Motor neuron (in vitro differentiated cells): ENCODE measurements at regions of chr2 and their contacts with region 1.

Region 1: DNA sequence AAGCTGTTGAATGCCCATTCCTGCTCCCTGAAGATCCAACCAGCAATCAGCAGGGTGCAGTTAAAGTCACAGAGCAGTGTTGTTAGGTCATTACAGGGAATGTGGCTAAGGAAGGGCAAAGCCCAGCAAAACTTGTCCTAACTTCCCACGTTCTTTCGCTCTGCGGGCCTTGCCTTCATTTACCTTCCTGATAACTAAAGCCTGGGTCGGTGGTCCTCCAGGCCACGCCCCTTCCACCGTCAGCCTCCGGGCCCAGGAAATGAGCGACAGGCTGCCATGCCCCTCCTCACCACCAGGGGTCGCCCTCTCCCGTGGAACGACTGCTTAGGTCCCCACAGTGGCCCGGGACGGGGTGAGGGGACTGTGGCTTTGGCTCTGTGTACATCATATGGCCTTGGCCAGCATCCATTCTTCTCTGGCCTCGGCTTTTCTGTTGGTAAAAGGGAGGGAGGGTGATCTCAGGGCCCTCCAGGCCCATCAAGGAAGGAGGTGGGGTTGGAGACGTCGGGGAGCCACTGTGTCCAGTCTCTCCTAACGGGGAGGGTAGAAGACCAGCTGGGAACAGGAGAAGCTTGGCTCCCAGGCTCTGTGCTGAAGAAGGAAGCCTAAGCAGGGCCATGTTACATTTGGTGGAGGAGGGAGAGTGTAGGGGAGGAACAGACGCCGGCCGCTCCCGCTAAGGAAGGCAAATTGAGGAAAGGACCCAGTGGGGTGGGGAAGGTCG is 2.2 kb downstream of the SH2D6 start:
- ATAC-seq: peak; percentile 54 to 71 (median 57)
- H3K4me3 ChIP-seq: peak overlapping the region in 1 of 5 donors; percentile 0
- H3K27ac ChIP-seq: peak overlapping the region in 1 of 2 donors; percentile 58
- H3K4me1 ChIP-seq: peaks cover 28 to 32% of the 10 kb centered on the region in 2 donors

Region 2: DNA sequence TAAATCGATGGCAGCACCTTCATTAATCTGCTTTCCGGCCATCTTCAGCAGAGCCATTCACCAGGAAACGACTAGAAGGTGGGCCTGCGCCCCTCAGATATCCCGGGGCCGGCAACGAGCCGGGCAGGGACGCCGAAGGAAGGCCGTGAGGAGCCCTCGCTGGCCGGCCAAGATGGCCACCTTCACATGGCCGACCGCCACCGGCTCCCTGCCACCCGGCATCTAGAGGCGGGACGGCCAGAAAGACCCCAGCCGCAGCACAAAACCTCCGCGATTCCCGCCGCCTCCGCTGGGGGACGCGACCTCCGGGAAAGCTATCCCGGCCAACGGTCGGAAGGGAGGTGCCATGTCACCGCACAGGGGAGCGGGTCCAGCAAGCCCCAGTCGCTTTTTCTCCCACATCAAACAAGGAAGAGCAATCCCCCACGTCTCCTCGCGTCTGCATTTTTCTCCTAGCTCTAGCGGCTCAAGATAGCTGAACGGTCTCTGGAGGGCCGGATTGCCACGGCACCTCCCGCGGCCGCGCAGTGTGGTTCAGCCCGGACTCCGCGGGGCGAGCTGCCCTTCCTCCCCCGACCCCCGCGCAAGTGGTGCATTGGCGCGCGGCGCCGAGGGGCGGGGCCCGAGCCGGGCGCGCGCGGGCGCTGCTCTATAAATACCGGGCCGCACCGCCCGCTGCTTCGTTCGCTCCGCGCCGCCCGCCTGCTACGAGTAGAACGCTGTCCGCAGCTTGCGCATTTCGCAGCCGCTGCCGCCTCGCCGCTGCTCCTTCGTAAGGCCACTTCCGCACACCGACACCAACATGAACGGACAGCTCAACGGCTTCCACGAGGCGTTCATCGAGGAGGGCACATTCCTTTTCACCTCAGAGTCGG is 118.0 kb after region 1 on chr2 and contains the start of gene MAT2A:
- in situ Hi-C with region 1: loop called in 3 of 9 experiments (anchors 10 to 25 kb)
- ATAC-seq: peak; percentile 59 to 81 (median 78)
- H3K4me3 ChIP-seq: peak within 1 kb of the TSS; percentile 69 to 97 (median 86)
- H3K27ac ChIP-seq: peak within 1 kb of the TSS; percentile 100
- H3K4me1 ChIP-seq: peaks cover 20 to 26% of the 10 kb centered on the region in 2 donors
- total RNA-seq, gene MAT2A: 64.8 to 340 (median 147) TPM

Region 3: DNA sequence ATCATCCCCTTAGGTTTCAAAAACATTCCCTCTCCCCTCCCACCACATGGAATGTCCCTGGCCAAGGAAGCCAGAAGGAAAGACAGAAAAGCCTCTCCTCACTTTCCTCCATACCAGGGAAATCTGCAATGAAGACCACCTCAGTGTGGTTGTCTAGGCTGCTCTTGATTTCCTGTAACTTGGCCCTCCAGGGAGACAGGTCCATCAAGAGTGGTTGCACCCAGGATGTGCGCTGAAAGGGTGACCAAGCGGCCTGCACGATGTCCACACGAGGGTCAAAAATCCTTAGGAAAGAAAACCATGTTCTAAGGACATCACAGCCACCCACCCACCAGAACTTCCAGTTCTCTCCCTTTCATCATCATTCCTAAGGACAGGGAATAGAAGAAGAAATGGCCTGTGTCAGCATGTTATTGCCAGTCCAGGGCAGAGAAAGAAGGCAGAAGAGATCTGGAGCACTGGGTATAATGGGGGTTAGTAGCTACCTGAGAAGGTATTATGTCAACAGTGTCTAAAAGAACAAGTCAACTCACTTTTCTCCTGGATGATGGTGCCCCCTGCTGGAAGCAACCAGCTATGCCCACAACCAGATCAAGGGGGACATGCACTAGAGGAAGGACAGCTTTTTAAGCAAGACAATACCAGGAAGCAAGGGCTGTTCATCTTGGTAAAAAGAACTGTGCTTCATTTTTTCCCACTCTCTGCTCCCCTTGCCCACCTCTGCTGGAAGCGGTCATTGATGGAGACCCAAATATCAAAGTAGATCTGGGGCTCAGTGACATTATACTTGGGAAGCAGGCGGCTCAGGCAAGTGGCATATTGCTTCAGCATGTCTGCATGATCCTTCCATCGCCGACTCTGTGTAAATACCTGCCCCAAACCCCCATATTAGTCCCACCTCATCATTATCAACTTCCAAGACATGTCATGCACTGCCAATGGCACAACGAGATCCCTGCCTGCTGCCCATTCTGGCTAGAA is 131.3 kb after region 1 on chr2:
- in situ Hi-C with region 1: loop called in 8 of 9 experiments (anchors 5 to 25 kb)
- ATAC-seq: peak; percentile 27 to 60 (median 48)
- H3K4me3 ChIP-seq: no peak overlapping the region
- H3K27ac ChIP-seq: no peak overlapping the region
- H3K4me1 ChIP-seq: no peaks in the 10 kb centered on the region

Region 4: GRCh38 chr2:85813982-85814801 is 393.5 kb after region 1 on chr2:
- in situ Hi-C with region 1: no loop called
- ATAC-seq: peak; percentile 98 to 100 (median 100)
- H3K4me3 ChIP-seq: no peak overlapping the region
- H3K27ac ChIP-seq: no peak overlapping the region
- H3K4me1 ChIP-seq: no peaks in the 10 kb centered on the region